ENCODE measurements at regions of chr11 and their contacts with region 1.

Region 1: GRCh38 chr11:7986768-7987559 is at the start of gene EIF3F:
- DNase-seq: peak; percentile 99
- H3K4me3 Mint-ChIP-seq: peak within 1 kb of the TSS; percentile 92
- H3K27ac Mint-ChIP-seq: peak within 1 kb of the TSS; percentile 82
- H3K4me1 Mint-ChIP-seq: peaks cover 24% of the 10 kb centered on the region
- H3K27me3 Mint-ChIP-seq: no peaks in the 10 kb centered on the region
- CTCF ChIP-seq: peak; percentile 91
- total RNA-seq, gene EIF3F: 255 and 309 TPM in 2 replicates

Region 2: GRCh38 chr11:7688238-7688826 is 298.6 kb before region 1 on chr11:
- CTCF ChIA-PET with region 1: interaction called, 4 read pairs
- POLR2A ChIA-PET with region 1: no interaction called
- intact Hi-C with region 1: loop called (anchors 5 kb)
- DNase-seq: peak; percentile 32
- H3K4me3 Mint-ChIP-seq: no peak overlapping the region
- H3K27ac Mint-ChIP-seq: no peak overlapping the region
- H3K4me1 Mint-ChIP-seq: peaks cover 13% of the 10 kb centered on the region
- H3K27me3 Mint-ChIP-seq: peaks cover 11% of the 10 kb centered on the region
- CTCF ChIP-seq: peak; percentile 62

Region 3: GRCh38 chr11:7874061-7874460 is 112.9 kb before region 1 on chr11:
- CTCF ChIA-PET with region 1: interaction called, 16 read pairs
- POLR2A ChIA-PET with region 1: interaction called, 4 read pairs
- intact Hi-C with region 1: no loop called
- DNase-seq: no peak
- H3K4me3 Mint-ChIP-seq: no peak overlapping the region
- H3K27ac Mint-ChIP-seq: peak overlapping the region; percentile 20
- H3K4me1 Mint-ChIP-seq: peaks cover 22% of the 10 kb centered on the region
- H3K27me3 Mint-ChIP-seq: no peaks in the 10 kb centered on the region
- CTCF ChIP-seq: no peak

Region 4: GRCh38 chr11:7892840-7893254 is 94.1 kb before region 1 on chr11:
- CTCF ChIA-PET with region 1: interaction called, 260 read pairs
- POLR2A ChIA-PET with region 1: interaction called, 36 read pairs
- intact Hi-C with region 1: loop called (anchors 1 kb)
- DNase-seq: peak; percentile 66
- H3K4me3 Mint-ChIP-seq: no peak overlapping the region
- H3K27ac Mint-ChIP-seq: peak overlapping the region; percentile 54
- H3K4me1 Mint-ChIP-seq: peaks cover 26% of the 10 kb centered on the region
- H3K27me3 Mint-ChIP-seq: no peaks in the 10 kb centered on the region
- CTCF ChIP-seq: peak; percentile 68

Region 5: DNA sequence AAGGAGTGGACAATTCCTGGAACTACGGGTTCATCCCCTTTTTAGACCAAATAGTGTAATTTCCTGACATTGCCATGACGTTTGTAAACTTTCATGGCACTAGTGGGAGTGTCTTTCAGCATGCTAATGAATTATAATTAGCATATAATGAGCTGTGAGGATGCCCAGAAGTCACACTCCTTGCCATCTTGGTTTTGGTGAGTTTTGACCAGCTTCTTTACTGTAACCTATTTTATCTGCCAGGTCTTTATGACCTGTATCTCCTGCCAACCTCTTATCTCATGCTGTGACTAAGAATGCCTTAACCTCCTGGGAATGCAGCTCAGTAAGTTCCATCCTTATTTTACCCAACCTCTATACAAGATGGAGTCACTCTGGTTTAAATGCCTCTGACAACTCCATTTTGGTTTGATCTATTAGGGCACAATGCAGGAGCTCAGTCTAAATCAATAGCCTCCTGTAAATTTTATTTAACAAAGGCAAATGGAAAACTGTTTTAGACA is 76.6 kb before region 1 on chr11:
- CTCF ChIA-PET with region 1: interaction called, 98 read pairs
- POLR2A ChIA-PET with region 1: interaction called, 9 read pairs
- intact Hi-C with region 1: loop called (anchors 1 kb)
- DNase-seq: no peak
- H3K4me3 Mint-ChIP-seq: no peak overlapping the region
- H3K27ac Mint-ChIP-seq: no peak overlapping the region
- H3K4me1 Mint-ChIP-seq: peaks cover 17% of the 10 kb centered on the region
- H3K27me3 Mint-ChIP-seq: no peaks in the 10 kb centered on the region
- CTCF ChIP-seq: no peak

Region 6: GRCh38 chr11:8006349-8006977 is 19.5 kb after region 1 on chr11:
- CTCF ChIA-PET with region 1: interaction called, 16 read pairs
- POLR2A ChIA-PET with region 1: interaction called, 3 read pairs
- intact Hi-C with region 1: no loop called
- DNase-seq: peak; percentile 72
- H3K4me3 Mint-ChIP-seq: no peak overlapping the region
- H3K27ac Mint-ChIP-seq: no peak overlapping the region
- H3K4me1 Mint-ChIP-seq: no peaks in the 10 kb centered on the region
- H3K27me3 Mint-ChIP-seq: peaks cover 11% of the 10 kb centered on the region
- CTCF ChIP-seq: peak; percentile 94

Region 7: DNA sequence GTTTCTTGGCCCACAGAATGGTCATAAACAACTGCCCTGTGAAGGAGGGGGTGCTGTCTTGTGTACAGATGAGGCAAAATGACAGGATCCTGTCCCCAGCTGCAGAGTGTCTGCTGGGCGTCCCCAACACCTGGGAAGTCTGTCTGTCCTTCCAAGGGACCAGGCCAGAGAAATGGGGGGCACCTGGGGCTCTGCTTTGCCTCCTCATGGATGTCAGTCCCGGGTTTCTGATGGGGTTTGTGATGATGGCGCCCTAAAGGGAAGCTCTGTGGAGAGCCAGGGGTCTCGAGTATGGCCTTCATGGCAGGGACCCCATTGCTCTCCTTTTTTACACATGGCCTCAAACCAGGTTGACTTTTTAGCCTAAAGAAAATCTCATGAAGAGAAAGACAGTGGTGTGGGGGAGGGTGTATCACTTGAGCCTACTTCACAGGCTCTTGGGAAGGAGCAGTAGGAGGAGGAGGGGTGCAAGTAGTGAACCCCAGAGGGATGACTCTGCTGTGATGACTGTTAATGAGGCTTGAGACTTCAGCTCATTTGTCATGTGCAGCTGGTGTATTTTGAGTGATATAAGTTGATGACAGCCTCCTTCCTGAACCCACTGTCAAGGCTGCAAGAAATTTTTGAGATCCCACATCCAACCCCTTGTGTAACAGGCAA is 53.4 kb after region 1 on chr11:
- CTCF ChIA-PET with region 1: no interaction called
- POLR2A ChIA-PET with region 1: no interaction called
- intact Hi-C with region 1: no loop called
- DNase-seq: no peak
- H3K4me3 Mint-ChIP-seq: no peak overlapping the region
- H3K27ac Mint-ChIP-seq: no peak overlapping the region
- H3K4me1 Mint-ChIP-seq: no peaks in the 10 kb centered on the region
- H3K27me3 Mint-ChIP-seq: peaks cover 47% of the 10 kb centered on the region
- CTCF ChIP-seq: no peak

Region 8: DNA sequence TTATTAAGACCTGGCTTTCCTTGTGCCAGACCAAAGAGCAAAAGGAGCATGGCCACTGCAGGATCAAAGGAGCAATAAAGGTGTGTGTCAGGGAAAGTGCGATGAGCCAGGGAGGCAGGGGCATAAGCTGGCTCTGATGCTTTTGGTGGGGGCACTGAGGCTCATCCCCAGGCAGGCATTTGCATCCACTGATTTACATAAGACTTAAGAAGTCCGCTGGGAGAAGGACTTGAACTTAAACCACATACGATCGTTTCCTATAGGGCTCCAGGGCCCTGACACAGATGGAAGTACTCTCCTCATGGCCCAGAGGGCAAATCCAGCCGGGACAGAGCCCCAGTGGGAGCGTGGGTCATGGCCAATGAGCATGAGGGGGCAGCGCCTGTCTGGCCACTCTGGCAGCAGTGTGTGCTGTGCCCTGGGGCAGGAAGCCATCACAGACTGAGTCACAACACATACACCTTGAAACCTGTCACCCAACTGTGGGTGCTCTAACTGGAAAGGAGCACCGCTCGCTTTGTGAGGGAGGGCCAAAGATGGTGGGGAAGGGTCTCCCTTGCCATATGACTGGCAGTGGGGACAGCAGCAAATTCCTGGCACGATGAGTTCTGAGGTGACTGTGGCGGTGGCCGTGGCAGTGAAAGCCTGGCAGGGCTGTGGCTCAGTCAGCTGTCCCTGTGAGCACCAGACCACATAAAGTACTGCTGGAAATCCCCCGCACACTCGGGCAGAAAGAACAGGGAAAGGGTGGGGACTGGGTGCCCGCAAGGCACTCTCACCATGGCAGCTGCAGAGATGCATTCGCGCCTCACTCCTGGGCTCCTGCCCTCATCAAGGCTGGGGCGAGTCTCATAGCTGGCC is 356.1 kb after region 1 on chr11:
- CTCF ChIA-PET with region 1: no interaction called
- POLR2A ChIA-PET with region 1: no interaction called
- intact Hi-C with region 1: no loop called
- DNase-seq: no peak
- H3K4me3 Mint-ChIP-seq: no peak overlapping the region
- H3K27ac Mint-ChIP-seq: no peak overlapping the region
- H3K4me1 Mint-ChIP-seq: peaks cover 15% of the 10 kb centered on the region
- H3K27me3 Mint-ChIP-seq: peaks cover 12% of the 10 kb centered on the region
- CTCF ChIP-seq: no peak

Measured in MCF 10A (cell line).